ENCODE measurements at regions of chr4 and their contacts with region 1.

Region 1: DNA sequence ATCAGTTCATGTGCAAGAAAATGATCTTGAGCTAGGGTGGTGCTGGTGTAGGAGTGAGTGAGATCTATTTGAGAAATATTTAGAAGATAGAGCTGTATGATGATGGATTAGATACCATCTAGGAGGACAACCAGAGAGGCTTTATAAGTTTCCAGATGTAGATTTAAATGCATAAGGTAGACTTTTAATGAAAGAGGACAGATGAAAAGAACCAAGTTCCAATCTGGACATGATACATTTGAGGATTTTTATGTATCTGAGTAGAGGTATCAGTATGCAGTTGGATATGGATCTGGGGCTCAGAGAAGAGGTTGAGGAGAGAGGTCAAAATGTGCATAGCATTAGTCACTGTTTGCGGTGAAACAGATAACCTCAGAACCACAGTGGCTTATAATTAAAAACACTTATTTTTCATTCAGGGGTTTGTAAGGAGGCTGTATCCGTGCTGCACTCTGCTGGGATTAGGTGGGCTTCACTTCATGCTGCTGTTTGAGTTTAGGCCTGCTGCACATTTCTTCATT is 348.7 kb downstream of the BMPR1B start:
- DNase-seq: no peak
- H3K4me3 ChIP-seq: no peak overlapping the region
- H3K27ac ChIP-seq: no peak overlapping the region
- H3K4me1 ChIP-seq: no peaks in the 10 kb centered on the region
- H3K27me3 ChIP-seq: no peaks in the 10 kb centered on the region
- CTCF ChIP-seq: no peak
- EP300 ChIP-seq: no peak
- POLR2A ChIP-seq: no peak
- RAD21 ChIP-seq: no peak

Region 2: DNA sequence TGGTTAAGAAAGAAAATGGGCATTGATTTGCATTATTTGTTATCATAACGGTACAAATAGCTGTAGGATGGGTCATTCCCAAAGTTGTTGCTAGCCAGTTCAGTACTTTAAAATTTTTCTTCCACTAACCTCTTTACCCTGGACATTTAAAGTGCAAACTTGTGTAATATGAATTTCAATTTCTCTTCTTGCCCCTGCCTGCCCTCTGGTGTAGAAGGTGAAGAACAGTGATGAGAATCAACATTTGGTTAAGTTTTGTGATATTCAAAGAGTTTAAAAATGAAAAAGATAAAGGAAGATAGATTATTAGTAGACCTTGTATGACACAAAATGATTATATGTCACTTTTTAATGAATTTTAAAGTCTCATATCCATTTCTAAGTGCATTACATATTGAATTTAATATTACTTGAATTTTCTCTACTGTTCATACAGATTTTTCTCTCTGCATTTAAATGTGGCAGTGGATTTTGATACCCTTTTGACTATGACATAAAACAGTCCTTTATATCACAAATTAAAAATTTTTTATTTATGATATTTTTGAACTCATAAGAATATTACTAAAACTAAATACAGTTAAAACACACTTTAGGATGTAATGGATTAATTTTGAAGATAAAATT is 11.0 kb before region 1 on chr4:
- CTCF ChIA-PET with region 1: interaction called, 10 read pairs
- POLR2A ChIA-PET with region 1: no interaction called
- DNase-seq: no peak
- H3K4me3 ChIP-seq: no peak overlapping the region
- H3K27ac ChIP-seq: no peak overlapping the region
- H3K4me1 ChIP-seq: no peaks in the 10 kb centered on the region
- H3K27me3 ChIP-seq: peaks cover 0 to 1% (median 0%) of the 10 kb centered on the region in 4 experiments; a peak in 1 of 7 replicates
- CTCF ChIP-seq: peak in 2 of 3 experiments; percentile 33 to 45; a peak in 2 of 4 replicates
- EP300 ChIP-seq: no peak
- POLR2A ChIP-seq: no peak
- RAD21 ChIP-seq: peak; percentile 71 to 80